ENCODE measurements at regions of chr12 and their contacts with region 1.

Region 1: DNA sequence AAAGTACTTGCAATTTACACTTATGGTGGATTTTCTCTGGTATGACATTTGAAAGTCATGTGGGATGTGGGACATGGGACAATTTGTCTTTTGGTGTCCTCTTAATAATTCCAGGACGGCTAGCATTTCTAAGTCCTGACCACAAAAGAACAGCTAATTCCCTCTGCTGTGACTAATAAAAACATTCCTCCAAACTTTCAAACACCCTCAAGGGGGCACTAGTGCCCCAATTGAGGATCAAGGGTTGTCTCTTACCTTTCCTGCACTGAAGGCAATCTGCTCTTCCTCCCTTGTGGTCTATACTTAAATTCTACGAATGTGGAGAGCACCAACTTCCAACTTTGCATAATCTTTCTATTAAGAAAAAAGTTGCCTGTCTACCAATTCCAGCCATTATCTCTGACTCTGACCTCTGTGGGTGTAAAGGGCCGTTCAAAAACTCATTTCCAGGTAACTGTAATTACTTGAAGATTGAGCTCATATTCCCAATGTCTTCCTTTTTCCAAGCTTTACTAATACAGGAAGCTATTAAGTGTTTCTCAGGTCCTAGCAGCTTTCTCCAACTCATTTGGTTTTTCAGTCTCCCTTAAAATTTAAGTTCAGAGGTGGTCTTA is 210.2 kb downstream of the PTPRO start:
- DNase-seq: peak in 1 of 2 donors; percentile 39
- ATAC-seq: peak; percentile 62

Region 2: DNA sequence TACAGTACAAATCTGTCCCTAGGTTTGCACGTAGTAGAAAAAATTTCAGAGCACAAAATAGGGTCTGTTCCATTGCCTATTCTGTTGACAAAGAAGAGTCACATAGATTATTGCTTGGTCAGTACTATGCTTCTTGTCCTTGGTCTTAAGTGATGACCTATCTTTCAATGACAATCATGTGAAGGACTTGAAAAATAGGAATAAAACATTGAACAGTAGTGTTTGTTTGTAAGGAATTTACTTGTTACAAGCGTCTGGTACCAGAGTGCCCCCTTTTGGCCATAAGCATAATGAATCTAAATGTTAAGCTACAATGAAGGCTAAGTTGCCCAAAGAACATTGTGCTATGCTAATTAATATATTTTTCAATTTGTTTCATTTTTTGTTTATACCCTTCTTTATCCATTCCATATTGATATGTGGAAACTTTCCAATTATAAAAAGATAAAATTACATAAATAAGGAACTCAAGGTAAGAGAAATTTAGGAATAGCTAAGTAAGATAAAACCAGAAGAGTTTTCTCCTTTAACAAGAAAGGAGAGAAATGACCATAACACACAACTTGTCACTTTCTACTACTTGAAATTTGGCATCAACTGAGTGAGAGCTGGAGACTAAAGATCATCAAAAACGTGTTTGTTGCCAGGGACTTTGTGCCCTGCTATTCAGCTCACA is 52.0 kb after region 1 on chr12:
- intact Hi-C with region 1: loop called in 1 of 2 experiments (anchors 5 kb)
- DNase-seq: peak in 1 of 2 donors; percentile 38
- ATAC-seq: peak; percentile 20